Activated CD4-positive, alpha-beta T cell treated with anti-CD3 and anti-CD28 coated beads, Interleukin-2, amount 10 ng/mL, durations not matched to agents 24 days and 14 days (primary cell): ENCODE measurements at regions of chr14 and their contacts with region 1.

Region 1: GRCh38 chr14:32252030-32252670 is 49.1 kb upstream of the RNU6-8 start:
- DNase-seq: peak; percentile 87
- H3K4me3 Mint-ChIP-seq: no peak overlapping the region
- H3K27ac Mint-ChIP-seq: no peak overlapping the region
- H3K4me1 Mint-ChIP-seq: no peaks in the 10 kb centered on the region
- H3K27me3 Mint-ChIP-seq: no peaks in the 10 kb centered on the region

Region 2: GRCh38 chr14:31510222-31510621 is 741.9 kb before region 1 on chr14:
- intact Hi-C with region 1: loop called (anchors 1 kb)
- DNase-seq: no peak
- H3K4me3 Mint-ChIP-seq: no peak overlapping the region
- H3K27ac Mint-ChIP-seq: no peak overlapping the region
- H3K4me1 Mint-ChIP-seq: no peaks in the 10 kb centered on the region
- H3K27me3 Mint-ChIP-seq: peaks cover 9% of the 10 kb centered on the region

Region 3: DNA sequence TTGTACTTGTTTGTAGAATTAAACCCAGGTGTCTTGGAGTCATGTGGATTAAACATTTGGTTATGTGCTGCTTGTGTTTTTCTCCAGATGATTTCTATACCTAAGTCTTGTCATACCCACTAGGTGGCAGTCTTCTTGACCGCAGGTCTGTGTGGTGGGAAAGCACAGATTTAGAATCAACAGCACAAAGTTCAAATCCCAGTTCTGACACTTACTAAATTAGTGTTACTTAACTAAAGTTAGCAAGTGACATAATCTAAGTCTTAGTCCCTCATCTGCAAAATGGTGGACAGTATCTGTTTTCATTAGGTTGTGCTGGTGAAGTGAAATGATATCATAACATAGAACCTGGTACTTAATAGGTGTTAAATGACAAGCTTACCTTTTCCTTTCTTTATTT is 326.0 kb before region 1 on chr14:
- intact Hi-C with region 1: loop called (anchors 1 kb)
- DNase-seq: peak; percentile 76
- H3K4me3 Mint-ChIP-seq: no peak overlapping the region
- H3K27ac Mint-ChIP-seq: no peak overlapping the region
- H3K4me1 Mint-ChIP-seq: peaks cover 8% of the 10 kb centered on the region
- H3K27me3 Mint-ChIP-seq: no peaks in the 10 kb centered on the region

Region 4: GRCh38 chr14:31955936-31956579 is 296.1 kb before region 1 on chr14:
- intact Hi-C with region 1: no loop called
- DNase-seq: no peak
- H3K4me3 Mint-ChIP-seq: no peak overlapping the region
- H3K27ac Mint-ChIP-seq: no peak overlapping the region
- H3K4me1 Mint-ChIP-seq: peaks cover 6% of the 10 kb centered on the region
- H3K27me3 Mint-ChIP-seq: no peaks in the 10 kb centered on the region

Region 5: DNA sequence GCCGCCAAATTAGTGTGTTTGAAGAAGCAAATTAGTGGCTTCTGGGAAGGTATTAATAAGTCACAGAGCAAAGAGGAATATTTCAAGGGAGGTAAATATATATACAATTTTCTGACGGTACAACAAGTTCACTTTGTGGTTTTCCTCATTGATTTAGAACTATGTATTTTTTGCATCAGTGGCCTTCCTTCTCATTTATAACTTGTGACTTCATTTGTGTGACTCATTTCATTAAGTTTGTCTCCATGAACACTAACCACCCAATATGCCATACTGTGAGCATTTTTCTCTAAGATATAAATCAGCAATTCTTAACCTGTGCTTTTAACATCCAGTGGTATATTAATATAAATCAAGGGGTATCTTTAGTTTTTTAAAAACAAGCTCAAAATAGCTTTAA is 204.4 kb before region 1 on chr14:
- intact Hi-C with region 1: no loop called
- DNase-seq: no peak
- H3K4me3 Mint-ChIP-seq: no peak overlapping the region
- H3K27ac Mint-ChIP-seq: no peak overlapping the region
- H3K4me1 Mint-ChIP-seq: peaks cover 3% of the 10 kb centered on the region
- H3K27me3 Mint-ChIP-seq: no peaks in the 10 kb centered on the region

Region 6: DNA sequence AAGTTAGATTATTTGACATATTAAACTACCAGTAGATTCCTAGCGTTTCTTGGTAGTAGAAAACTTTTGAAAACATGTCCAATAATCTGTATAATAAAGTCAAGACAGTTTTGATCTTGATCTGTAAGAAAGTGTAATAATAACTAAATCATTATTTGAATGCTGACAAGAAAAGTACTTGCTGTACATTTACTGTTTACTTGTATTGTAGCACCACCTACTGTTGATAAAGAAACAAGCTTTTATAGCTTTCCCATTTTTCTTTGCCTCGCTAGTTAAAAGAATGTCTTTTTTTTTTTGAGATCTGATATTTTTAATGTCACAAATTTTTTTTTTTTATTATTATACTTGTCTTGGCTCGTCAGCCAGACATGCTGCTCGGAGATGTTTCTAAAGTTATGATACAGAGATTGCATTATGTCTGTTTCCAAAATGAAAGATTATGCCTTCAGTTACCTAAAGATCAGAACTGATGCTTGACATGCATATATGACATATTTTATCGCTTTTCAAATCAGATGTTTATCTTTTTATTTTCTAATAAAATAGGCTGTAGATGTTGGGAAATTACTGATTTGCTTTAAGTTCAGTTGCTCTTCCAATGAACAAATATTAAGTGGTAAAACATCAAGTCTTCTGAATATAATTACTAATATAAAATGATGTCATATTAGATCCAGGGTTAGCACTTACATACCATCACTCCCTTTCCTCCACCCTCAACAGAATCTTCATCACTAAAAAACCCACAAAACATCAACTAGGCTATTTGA is 217.4 kb after region 1 on chr14:
- intact Hi-C with region 1: loop called (anchors 2 kb)
- DNase-seq: no peak
- H3K4me3 Mint-ChIP-seq: no peak overlapping the region
- H3K27ac Mint-ChIP-seq: no peak overlapping the region
- H3K4me1 Mint-ChIP-seq: no peaks in the 10 kb centered on the region
- H3K27me3 Mint-ChIP-seq: peaks cover 7% of the 10 kb centered on the region

Region 7: DNA sequence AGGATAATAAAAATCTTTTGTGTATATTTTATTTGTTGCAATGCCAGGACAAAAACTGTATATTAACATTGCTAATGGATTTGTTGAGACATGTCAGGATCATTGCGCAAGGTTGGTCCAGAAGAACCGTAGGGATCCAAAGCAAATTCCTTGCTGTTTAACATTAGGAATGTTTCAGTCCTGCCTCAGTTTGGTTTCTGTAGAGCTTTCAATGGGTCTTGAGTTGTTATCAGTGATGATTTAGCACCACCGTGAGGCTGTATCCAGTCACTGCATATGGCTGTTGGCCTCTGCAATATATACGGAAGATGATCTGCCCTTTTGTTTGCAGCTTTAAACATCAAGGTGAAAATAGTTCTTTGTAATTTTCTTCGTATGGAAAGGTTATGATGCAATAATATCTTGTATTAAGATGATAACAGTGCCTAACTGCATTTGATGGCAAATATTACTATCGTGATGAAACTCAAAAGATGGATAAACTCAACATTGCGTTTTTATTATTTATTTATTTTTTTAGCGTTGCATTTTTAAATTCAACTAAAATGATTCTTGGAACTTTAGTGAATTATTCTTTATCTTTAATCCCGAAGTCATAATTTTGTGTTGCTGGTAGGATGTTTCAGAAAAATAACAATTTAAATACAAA is 308.2 kb after region 1 on chr14:
- intact Hi-C with region 1: loop called (anchors 5 kb)
- DNase-seq: peak; percentile 81
- H3K4me3 Mint-ChIP-seq: no peak overlapping the region
- H3K27ac Mint-ChIP-seq: no peak overlapping the region
- H3K4me1 Mint-ChIP-seq: peaks cover 13% of the 10 kb centered on the region
- H3K27me3 Mint-ChIP-seq: no peaks in the 10 kb centered on the region